Cardiac septum (tissue), 1 donor: ENCODE measurements at regions of chr11 and their contacts with region 1.

Region 1: DNA sequence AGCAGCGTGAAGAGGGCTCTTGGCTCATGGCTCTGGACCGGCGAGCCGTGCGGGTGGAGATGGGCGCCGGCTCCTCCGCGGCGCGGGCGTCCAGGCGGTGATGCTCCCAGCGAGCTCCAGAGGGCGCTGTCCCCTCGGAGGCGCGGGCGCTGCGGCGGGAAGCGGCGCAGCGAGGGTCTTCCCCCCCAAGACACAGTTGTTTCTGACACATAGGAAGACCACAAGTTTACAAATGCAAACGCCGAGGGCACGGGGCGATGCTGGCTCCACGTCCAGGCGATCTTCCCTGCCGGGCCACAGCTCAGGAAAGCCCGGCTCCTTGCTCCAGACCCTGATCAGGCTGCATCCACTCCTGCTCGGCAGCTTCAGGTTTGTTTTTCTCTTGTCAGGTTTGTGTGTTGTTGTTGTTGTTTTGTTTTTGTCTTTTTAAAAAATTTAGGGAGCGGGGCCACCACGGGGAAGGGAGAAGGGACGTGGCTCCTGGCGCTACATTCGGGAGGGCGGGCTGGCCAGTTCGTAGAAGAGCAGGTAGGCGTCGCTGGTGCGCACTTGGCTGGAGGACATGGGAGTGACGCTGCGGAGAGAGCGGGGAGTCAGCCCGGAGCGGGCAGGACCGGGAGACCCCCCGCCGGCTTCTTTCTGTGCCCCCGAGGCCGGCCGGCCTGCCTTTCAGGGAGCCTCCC is 10.0 kb upstream of the MFRP start:
- DNase-seq: peak; percentile 92

Region 2: GRCh38 chr11:119373921-119374631 is 17.6 kb after region 1 on chr11:
- intact Hi-C with region 1: loop called (anchors 1 kb)
- DNase-seq: no peak

Region 3: GRCh38 chr11:119474682-119475596 is 118.4 kb after region 1 on chr11:
- intact Hi-C with region 1: loop called (anchors 2 kb)
- DNase-seq: no peak